CD4-positive, alpha-beta T cell (primary cell): ENCODE measurements at regions of chr2 and their contacts with region 1.

Region 1: DNA sequence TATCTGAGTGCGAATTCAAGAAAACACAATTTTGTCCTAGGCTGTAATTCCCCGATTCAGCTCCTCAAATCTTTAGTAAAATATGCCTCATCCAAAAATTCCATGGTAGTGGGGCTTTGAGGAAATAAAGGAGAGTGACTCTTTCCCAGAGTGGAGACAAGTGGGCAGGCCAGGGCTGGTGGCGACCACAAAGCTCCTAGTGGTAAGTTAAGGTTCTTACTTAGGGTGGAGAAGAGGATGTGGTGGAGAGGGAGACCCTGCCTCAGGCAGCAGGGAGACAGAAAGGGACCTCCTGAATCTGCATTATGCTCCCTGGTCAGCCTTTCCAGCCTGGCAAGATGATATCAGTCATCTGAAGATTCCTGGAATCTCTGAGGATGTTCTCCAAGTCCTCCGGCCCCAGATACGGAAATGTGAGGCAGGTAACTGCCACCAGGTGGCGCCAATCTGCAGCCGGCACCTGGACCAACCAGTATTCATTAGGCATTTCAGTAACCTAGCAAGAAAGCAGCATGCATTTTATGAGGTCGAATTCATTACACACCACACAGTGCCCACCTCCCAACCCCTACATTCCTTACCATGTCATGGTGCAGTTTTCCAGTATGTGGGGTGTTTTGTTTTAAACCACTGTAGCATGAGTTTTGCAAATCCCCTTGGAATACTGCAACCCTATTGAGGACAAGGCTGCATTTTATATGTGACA is 106.4 kb downstream of the POLE4 start:
- DNase-seq: peak; percentile 8 to 66 (median 28)
- ATAC-seq: no peak
- H3K4me3 ChIP-seq: no peak overlapping the region
- H3K4me3 Mint-ChIP-seq: no peak overlapping the region
- H3K27ac ChIP-seq: no peak overlapping the region
- H3K27ac Mint-ChIP-seq: no peak overlapping the region
- H3K4me1 ChIP-seq: no peaks in the 10 kb centered on the region
- H3K4me1 Mint-ChIP-seq: no peaks in the 10 kb centered on the region
- H3K27me3 ChIP-seq: no peaks in the 10 kb centered on the region
- H3K27me3 Mint-ChIP-seq: peaks cover 6% of the 10 kb centered on the region
- CTCF ChIP-seq: peak; percentile 83

Region 2: GRCh38 chr2:75403991-75404428 is 339.2 kb after region 1 on chr2:
- CTCF ChIA-PET with region 1: no interaction called
- POLR2A ChIA-PET with region 1: no interaction called
- intact Hi-C with region 1: loop called (anchors 2 to 5 kb)
- DNase-seq: peak in 3 of 14 experiments; percentile 44 to 60 (median 55)
- ATAC-seq: peak; percentile 61
- H3K4me3 ChIP-seq: no peak overlapping the region
- H3K4me3 Mint-ChIP-seq: no peak overlapping the region
- H3K27ac ChIP-seq: no peak overlapping the region
- H3K27ac Mint-ChIP-seq: no peak overlapping the region
- H3K4me1 ChIP-seq: no peaks in the 10 kb centered on the region
- H3K4me1 Mint-ChIP-seq: peaks cover 5% of the 10 kb centered on the region
- H3K27me3 ChIP-seq: no peaks in the 10 kb centered on the region
- H3K27me3 Mint-ChIP-seq: peaks cover 10% of the 10 kb centered on the region
- CTCF ChIP-seq: peak; percentile 78

Region 3: DNA sequence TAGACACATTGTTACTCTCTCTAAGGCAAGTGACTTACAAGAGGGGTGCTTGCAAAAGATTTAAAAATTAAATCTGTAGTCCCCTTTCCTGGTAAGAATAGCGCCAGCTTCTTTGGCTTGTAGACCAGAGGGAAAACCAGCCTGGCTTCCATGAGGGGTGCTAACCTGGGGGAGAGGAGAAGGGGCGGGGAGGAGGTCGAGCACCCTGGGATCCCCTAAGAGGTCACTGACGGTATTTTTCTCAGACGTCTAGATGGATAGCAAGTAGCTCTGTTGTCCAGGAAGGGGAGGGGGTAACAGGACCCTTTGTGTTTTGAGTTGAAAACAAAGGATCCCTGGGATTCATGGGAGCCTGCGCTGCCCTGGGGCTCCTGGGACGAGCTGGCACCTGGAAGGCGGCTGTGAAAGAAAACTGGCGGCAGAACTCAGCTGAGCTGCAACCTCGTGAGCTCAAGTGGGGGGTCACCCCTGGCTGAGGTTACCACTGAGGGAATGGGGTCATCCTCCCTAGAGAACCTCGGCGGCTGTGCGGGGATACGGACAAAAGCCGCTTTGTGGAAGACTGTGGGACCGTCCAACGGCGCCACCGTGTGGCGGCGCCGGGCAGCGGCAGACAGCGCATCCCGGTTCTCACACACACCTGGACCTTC is 544.0 kb after region 1 on chr2:
- CTCF ChIA-PET with region 1: no interaction called
- POLR2A ChIA-PET with region 1: no interaction called
- intact Hi-C with region 1: loop called (anchors 2 to 10 kb)
- DNase-seq: peak; percentile 20 to 68 (median 36)
- ATAC-seq: peak; percentile 71
- H3K4me3 ChIP-seq: no peak overlapping the region
- H3K4me3 Mint-ChIP-seq: no peak overlapping the region
- H3K27ac ChIP-seq: no peak overlapping the region
- H3K27ac Mint-ChIP-seq: no peak overlapping the region
- H3K4me1 ChIP-seq: peaks cover 4% of the 10 kb centered on the region
- H3K4me1 Mint-ChIP-seq: no peaks in the 10 kb centered on the region
- H3K27me3 ChIP-seq: peaks cover 27 to 28% of the 10 kb centered on the region in 2 experiments
- H3K27me3 Mint-ChIP-seq: peaks cover 81% of the 10 kb centered on the region
- CTCF ChIP-seq: peak; percentile 84